Panc1 (cell line): ENCODE measurements at regions of chr17 and their contacts with region 1.

Region 1: DNA sequence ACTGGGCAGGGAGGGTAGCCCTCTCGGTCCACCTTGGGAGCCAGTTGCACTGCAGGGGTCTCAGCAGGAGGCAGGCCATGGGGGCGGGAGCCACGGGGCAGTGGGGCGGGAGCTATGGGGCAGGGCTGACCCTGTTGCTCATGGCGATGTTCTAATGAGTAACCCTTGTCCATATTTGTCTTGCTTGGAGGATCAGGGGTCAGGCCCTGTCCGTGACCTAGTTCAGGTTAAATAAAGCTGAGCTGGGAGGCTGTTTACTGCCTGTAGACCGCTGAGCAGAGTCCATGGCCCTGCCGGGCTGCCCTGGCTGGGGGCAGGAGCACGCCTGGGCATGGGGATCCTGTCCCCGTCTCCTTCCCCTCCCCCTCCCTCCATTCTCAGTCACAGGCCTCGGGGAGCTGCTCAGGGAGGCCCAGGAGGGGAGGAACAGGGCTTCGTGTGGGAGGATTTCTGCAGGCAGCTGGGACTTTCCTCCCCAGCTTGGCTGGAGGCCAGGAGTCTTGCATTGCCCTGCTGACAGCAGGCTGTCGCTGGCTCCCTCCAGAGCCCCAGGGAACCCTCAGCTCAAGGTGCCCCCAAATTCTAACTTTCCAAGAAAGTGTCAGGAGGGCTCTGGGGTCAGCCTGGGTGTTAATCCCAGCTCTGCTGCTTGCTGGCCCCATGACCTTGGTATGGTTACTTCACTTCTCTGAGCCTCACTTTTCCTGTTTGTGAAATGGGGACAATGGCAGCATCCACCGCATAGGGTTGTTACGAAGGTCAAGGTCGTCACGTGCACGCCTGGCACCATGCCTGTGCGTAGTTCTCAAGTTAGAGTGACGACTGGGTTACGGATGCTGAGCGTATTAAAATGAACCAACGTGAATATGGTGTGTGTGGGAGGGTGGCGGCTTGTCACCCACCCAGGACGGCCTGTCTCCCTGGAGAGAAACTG is 6.1 kb upstream of the SERPINF2 start:
- DNase-seq: no peak
- ATAC-seq: peak; percentile 74
- H3K4me3 ChIP-seq: no peak overlapping the region
- H3K27ac ChIP-seq: peak overlapping the region; percentile 48; the same call in 1 of the 2 replicates
- H3K4me1 ChIP-seq: peaks cover 12% of the 10 kb centered on the region
- H3K27me3 ChIP-seq: no peaks in the 10 kb centered on the region
- CTCF ChIP-seq: no peak

Region 2: DNA sequence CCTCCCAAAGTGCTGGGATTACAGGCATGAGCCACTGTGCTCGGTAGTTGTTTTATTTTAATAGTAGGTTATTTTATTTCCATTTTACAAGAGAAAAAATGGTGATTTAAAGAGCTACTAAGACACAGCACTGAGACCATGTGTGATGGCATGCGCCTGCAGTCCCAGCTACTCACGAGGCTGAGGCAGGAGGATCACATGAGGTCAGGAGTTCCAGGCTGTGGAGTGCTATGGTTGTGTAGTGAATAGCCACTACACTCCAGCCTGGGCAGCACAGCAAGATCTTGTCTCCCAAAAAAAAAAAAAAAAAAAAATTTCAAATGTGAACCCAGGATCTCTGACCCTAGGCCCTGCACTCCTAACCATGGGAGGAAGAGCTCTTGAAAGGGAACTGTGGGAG is 29.0 kb after region 1 on chr17:
- CTCF ChIA-PET with region 1: no interaction called
- POLR2A ChIA-PET with region 1: interaction called, 16 read pairs
- in situ Hi-C with region 1: no loop called
- intact Hi-C with region 1: no loop called
- DNase-seq: no peak
- ATAC-seq: no peak
- H3K4me3 ChIP-seq: no peak overlapping the region
- H3K27ac ChIP-seq: no peak overlapping the region
- H3K4me1 ChIP-seq: peaks cover 20% of the 10 kb centered on the region
- H3K27me3 ChIP-seq: no peaks in the 10 kb centered on the region
- CTCF ChIP-seq: no peak